Activated T-helper 1 cell treated with anti-CD3 and anti-CD28 coated beads, Interleukin-12 subunit alpha, Interleukin-12 subunit beta, Interleukin-2, Interleukin-4 antibody, amounts not matched to agents 30 ng/mL and 10 ng/mL and 1 ng/mL, durations not matched to agents 14 hours and 24 hours and 36 hours (primary cell): ENCODE measurements at regions of chr6 and their contacts with region 1.

Region 1: GRCh38 chr6:49462927-49463611 is at the starts of genes CENPQ and MMUT:
- DNase-seq: peak; percentile 91
- H3K4me3 Mint-ChIP-seq: peak within 1 kb of the TSS; percentile 99
- H3K27ac Mint-ChIP-seq: peak within 1 kb of the TSS; percentile 97
- H3K4me1 Mint-ChIP-seq: peaks cover 57% of the 10 kb centered on the region
- H3K27me3 Mint-ChIP-seq: peaks cover 2% of the 10 kb centered on the region
- total RNA-seq, gene CENPQ: 18.2 and 18.7 TPM in 2 replicates
- total RNA-seq, gene MMUT: 13.0 and 13.4 TPM in 2 replicates

Region 2: GRCh38 chr6:49479308-49479970 is 16.4 kb after region 1 on chr6:
- intact Hi-C with region 1: no loop called
- DNase-seq: no peak
- H3K4me3 Mint-ChIP-seq: no peak overlapping the region
- H3K27ac Mint-ChIP-seq: no peak overlapping the region
- H3K4me1 Mint-ChIP-seq: no peaks in the 10 kb centered on the region
- H3K27me3 Mint-ChIP-seq: no peaks in the 10 kb centered on the region

Region 3: GRCh38 chr6:49550492-49551077 is 87.5 kb after region 1 on chr6 and contains the start of gene C6orf141:
- intact Hi-C with region 1: loop called (anchors 1 kb)
- DNase-seq: no peak
- H3K4me3 Mint-ChIP-seq: peak within 1 kb of the TSS; percentile 83
- H3K27ac Mint-ChIP-seq: peak within 1 kb of the TSS; percentile 19
- H3K4me1 Mint-ChIP-seq: peaks cover 20% of the 10 kb centered on the region
- H3K27me3 Mint-ChIP-seq: peaks cover 40% of the 10 kb centered on the region
- total RNA-seq, gene C6orf141: not detected in 2 replicates